ENCODE measurements at regions of chr1 and their contacts with region 1.

Region 1: GRCh38 chr1:91684481-91685196 is 184.0 kb downstream of the CDC7 start:
- DNase-seq: peak in 1 of 2 donors; percentile 19
- ATAC-seq: peak in 7 of 8 donors; percentile 31 to 66 (median 59)
- H3K4me3 ChIP-seq: no peak overlapping the region
- H3K27ac ChIP-seq: peak overlapping the region in 6 of 10 donors; percentile 3 to 59 (median 38)
- H3K4me1 ChIP-seq: peaks cover 0 to 57% (median 44%) of the 10 kb centered on the region in 9 donors
- H3K27me3 ChIP-seq: no peaks in the 10 kb centered on the region
- CTCF ChIP-seq: no peak

Region 2: GRCh38 chr1:91622616-91623015 is 62.0 kb before region 1 on chr1:
- intact Hi-C with region 1: loop called in 1 of 10 experiments (anchors 10 kb)
- DNase-seq: peak; percentile 66 to 67
- ATAC-seq: peak; percentile 61 to 90 (median 82)
- H3K4me3 ChIP-seq: no peak overlapping the region
- H3K27ac ChIP-seq: peak overlapping the region in 3 of 10 donors; percentile 17 to 49 (median 39)
- H3K4me1 ChIP-seq: peaks cover 0 to 25% (median 4%) of the 10 kb centered on the region in 9 donors
- H3K27me3 ChIP-seq: no peaks in the 10 kb centered on the region
- CTCF ChIP-seq: no peak

Region 3: DNA sequence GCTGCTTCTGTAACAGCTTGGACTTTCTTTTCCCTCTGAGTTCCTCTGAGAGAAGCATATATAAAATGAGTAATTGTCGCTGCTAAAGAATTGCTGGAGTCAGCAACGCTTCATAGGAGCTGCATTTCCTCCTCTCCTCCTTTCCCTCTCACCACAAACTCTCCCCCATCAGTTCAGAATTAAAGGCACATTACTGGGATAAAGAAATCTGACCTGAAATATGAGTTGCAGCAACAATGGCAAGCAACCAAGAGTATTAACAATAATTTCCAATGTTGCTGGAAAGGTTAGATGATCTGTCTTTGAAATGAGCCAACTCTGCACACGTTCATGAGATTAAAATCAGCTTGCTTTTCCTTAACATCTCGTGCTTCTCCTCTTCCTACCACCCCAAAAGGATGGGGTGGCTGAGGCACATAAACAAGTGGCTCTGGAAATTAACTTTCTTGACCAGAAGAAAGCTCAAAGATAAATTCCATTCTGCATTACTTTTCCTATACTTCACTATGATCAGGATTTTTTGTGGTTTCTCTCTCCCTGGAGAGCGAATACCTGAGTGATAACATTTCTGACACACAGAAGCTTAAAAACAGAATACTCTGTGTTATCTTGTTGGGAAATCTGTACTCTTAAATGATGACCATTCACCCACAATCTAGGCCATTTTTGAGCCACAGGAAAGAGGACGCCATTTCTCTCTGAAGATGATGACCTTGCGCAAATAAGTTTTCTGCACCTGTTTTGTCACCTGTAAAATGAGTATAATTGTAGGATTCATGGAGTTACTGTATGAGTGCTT is 111.2 kb after region 1 on chr1:
- intact Hi-C with region 1: loop called in 1 of 10 experiments (anchors 10 kb)
- DNase-seq: no peak
- ATAC-seq: no peak
- H3K4me3 ChIP-seq: no peak overlapping the region
- H3K27ac ChIP-seq: peak overlapping the region in 2 of 10 donors; percentile 7 to 41
- H3K4me1 ChIP-seq: peaks cover 13 to 61% (median 48%) of the 10 kb centered on the region in 9 donors
- H3K27me3 ChIP-seq: no peaks in the 10 kb centered on the region
- CTCF ChIP-seq: no peak